Activated CD4-positive, alpha-beta T cell treated with anti-CD3 and anti-CD28 coated beads, Interleukin-2, amount 10 ng/mL, durations not matched to agents 24 days and 14 days (primary cell): ENCODE measurements at regions of chr7 and their contacts with region 1.

Region 1: DNA sequence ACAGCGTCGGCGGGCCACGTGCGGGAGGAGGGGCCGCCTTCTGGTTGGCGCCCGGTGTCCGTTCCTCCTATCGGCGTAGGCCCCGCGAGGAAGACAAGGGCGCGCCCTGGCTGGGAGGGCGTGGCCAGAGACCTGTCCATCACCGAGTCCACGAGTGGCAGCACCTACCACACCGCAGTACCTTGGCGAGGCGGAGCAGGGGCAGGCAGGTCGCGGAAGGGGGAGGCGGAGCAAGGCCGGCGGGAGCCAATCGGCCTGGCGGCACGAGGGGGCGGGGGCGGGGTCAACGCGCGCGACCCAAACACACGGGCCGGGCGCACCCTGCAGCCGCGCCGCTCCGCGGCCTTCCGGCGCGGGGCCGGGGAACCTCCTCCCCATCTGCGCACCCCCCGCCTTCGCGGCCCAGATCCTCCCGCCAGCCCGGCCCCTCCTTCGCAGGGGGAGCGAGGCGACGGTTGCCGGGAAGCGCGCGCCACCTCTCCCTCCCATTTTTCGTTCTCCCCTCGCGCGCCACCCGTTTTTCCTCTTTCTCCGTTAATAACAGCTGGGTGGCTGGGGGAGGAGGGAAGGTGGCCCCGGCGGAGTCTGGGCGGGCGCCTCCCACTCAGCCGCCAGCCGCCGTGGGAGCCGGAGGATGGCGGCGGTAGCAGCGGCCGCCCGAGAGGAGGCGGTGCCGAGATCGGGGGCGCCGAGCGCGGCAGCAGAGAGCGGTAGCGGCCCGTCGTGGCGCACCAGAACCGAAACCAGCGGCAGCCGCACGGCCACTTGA is at the start of gene ZNRF2:
- DNase-seq: peak; percentile 100
- H3K4me3 Mint-ChIP-seq: peak within 1 kb of the TSS; percentile 88
- H3K27ac Mint-ChIP-seq: peak within 1 kb of the TSS; percentile 92
- H3K4me1 Mint-ChIP-seq: peaks cover 43% of the 10 kb centered on the region
- H3K27me3 Mint-ChIP-seq: no peaks in the 10 kb centered on the region
- total RNA-seq, gene ZNRF2: 8.8 and 9.2 TPM in 2 replicates

Region 2: GRCh38 chr7:30308389-30308788 is 23.9 kb after region 1 on chr7:
- intact Hi-C with region 1: loop called (anchors 2 kb)
- DNase-seq: no peak
- H3K4me3 Mint-ChIP-seq: no peak overlapping the region
- H3K27ac Mint-ChIP-seq: peak overlapping the region; percentile 37
- H3K4me1 Mint-ChIP-seq: peaks cover 30% of the 10 kb centered on the region
- H3K27me3 Mint-ChIP-seq: no peaks in the 10 kb centered on the region

Region 3: GRCh38 chr7:30330134-30331111 is 45.9 kb after region 1 on chr7:
- intact Hi-C with region 1: loop called (anchors 2 kb)
- DNase-seq: peak; percentile 78
- H3K4me3 Mint-ChIP-seq: peak overlapping the region; percentile 71
- H3K27ac Mint-ChIP-seq: peak overlapping the region; percentile 59
- H3K4me1 Mint-ChIP-seq: peaks cover 35% of the 10 kb centered on the region
- H3K27me3 Mint-ChIP-seq: peaks cover 3% of the 10 kb centered on the region

Region 4: GRCh38 chr7:30478349-30479201 is 194.1 kb after region 1 on chr7 and contains the start of gene NOD1:
- intact Hi-C with region 1: loop called (anchors 1 kb)
- DNase-seq: peak; percentile 93
- H3K4me3 Mint-ChIP-seq: peak within 1 kb of the TSS; percentile 92
- H3K27ac Mint-ChIP-seq: peak within 1 kb of the TSS; percentile 93
- H3K4me1 Mint-ChIP-seq: peaks cover 45% of the 10 kb centered on the region
- H3K27me3 Mint-ChIP-seq: no peaks in the 10 kb centered on the region
- total RNA-seq, gene NOD1: 11.6 and 12.9 TPM in 2 replicates